Naive thymus-derived CD4-positive, alpha-beta T cell (primary cell): ENCODE measurements at regions of chr6 and their contacts with region 1.

Region 1: DNA sequence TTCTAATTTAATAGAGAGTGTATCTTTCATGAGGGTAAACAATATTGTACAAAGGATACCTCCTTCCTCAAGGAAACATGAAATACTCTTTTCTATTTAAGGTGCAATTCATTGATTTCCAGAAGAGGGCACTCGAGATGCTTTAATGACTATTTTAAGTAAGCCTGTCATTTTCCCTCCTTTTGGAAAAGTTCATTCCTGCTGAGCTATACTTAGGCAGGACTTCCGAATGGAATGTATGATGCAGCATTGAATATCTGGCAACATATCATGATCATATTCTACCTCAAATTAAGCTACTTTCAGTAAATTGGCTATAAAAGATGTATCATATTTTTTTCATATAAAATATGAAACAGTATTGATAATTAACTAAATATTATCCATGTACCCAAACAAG is 5.0 kb downstream of the DST start:
- DNase-seq: peak in 1 of 9 donors; percentile 7
- ATAC-seq: no peak
- H3K4me3 ChIP-seq: no peak overlapping the region
- H3K4me3 Mint-ChIP-seq: no peak overlapping the region
- H3K27ac ChIP-seq: no peak overlapping the region
- H3K27ac Mint-ChIP-seq: no peak overlapping the region
- H3K4me1 ChIP-seq: no peaks in the 10 kb centered on the region
- H3K4me1 Mint-ChIP-seq: no peaks in the 10 kb centered on the region
- H3K27me3 ChIP-seq: no peaks in the 10 kb centered on the region
- H3K27me3 Mint-ChIP-seq: peaks cover 2 to 13% (median 10%) of the 10 kb centered on the region in 5 donors

Region 2: DNA sequence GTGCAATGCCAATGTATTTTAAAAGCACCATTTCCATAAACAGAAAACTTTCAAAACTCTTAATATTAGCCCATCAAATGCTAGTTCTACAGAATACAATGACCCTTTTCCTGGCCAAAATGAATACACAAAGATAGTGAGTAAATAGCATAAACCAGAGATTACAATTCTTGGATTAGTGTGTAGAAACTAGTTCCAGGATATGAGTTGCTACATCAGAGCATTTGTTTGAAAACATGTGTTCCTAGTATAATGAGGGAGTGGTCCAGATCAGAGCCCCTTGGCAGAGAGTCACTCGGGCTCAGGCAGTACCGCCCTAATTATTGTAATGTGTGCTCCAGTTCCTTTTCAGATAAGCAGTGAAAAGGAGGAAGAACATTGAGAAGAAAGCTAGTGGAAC is 326.6 kb before region 1 on chr6:
- CTCF ChIA-PET with region 1: no interaction called
- POLR2A ChIA-PET with region 1: no interaction called
- intact Hi-C with region 1: no loop called
- DNase-seq: no peak
- ATAC-seq: no peak
- H3K4me3 ChIP-seq: no peak overlapping the region
- H3K4me3 Mint-ChIP-seq: no peak overlapping the region
- H3K27ac ChIP-seq: no peak overlapping the region
- H3K27ac Mint-ChIP-seq: no peak overlapping the region
- H3K4me1 ChIP-seq: no peaks in the 10 kb centered on the region
- H3K4me1 Mint-ChIP-seq: no peaks in the 10 kb centered on the region
- H3K27me3 ChIP-seq: no peaks in the 10 kb centered on the region
- H3K27me3 Mint-ChIP-seq: peaks cover 0 to 25% (median 6%) of the 10 kb centered on the region in 5 donors

Region 3: DNA sequence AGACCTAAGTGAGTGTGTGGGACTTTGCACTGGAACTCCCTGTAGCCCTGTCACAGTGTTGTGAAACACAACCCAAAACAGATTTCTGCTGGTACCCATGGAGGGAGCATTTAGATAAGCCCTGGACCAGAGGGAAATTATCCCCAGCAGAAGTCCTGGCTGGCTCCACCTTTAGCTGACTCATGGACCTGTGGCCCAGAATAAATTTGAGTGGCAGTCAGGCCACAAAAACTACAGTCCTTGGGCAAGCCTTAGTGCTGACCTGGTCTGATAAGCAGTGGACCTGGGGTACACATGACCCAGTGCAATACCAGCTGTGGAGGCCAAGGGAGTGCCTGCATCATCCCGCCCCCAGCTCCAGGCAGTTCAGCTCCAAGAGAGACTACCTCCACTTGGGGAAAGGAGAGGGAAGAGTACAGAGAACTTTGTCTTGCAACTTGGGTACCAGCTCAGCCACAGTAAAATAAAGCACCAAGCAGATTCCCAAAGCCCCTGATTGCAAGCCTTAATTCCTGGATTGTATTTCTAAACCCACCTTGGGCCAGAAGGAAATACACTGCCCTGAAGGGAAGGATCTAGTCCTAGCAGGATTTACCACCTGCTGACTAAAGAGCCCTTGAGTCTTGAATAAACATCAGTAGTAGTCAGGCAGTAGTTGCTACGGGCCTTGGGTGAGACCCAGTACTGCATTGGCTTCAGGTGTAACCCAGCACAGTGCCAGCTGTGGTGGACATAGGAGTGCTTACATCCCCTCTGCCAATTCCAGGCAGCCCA is 249.8 kb before region 1 on chr6:
- CTCF ChIA-PET with region 1: no interaction called
- POLR2A ChIA-PET with region 1: no interaction called
- intact Hi-C with region 1: no loop called
- DNase-seq: no peak
- ATAC-seq: no peak
- H3K4me3 ChIP-seq: no peak overlapping the region
- H3K4me3 Mint-ChIP-seq: no peak overlapping the region
- H3K27ac ChIP-seq: no peak overlapping the region
- H3K27ac Mint-ChIP-seq: no peak overlapping the region
- H3K4me1 ChIP-seq: no peaks in the 10 kb centered on the region
- H3K4me1 Mint-ChIP-seq: no peaks in the 10 kb centered on the region
- H3K27me3 ChIP-seq: no peaks in the 10 kb centered on the region
- H3K27me3 Mint-ChIP-seq: peaks cover 0 to 25% (median 10%) of the 10 kb centered on the region in 5 donors

Region 4: GRCh38 chr6:56699066-56699654 is 61.5 kb after region 1 on chr6:
- CTCF ChIA-PET with region 1: no interaction called
- POLR2A ChIA-PET with region 1: no interaction called
- intact Hi-C with region 1: loop called in 1 of 2 experiments (anchors 1 kb)
- DNase-seq: peak in 1 of 9 donors; percentile 8
- ATAC-seq: no peak
- H3K4me3 ChIP-seq: no peak overlapping the region
- H3K4me3 Mint-ChIP-seq: no peak overlapping the region
- H3K27ac ChIP-seq: no peak overlapping the region
- H3K27ac Mint-ChIP-seq: no peak overlapping the region
- H3K4me1 ChIP-seq: no peaks in the 10 kb centered on the region
- H3K4me1 Mint-ChIP-seq: peaks cover 0 to 2% (median 0%) of the 10 kb centered on the region in 7 donors
- H3K27me3 ChIP-seq: no peaks in the 10 kb centered on the region
- H3K27me3 Mint-ChIP-seq: peaks cover 0 to 7% (median 4%) of the 10 kb centered on the region in 5 donors

Region 5: GRCh38 chr6:57021086-57021720 is 383.6 kb after region 1 on chr6:
- CTCF ChIA-PET with region 1: no interaction called
- POLR2A ChIA-PET with region 1: no interaction called
- intact Hi-C with region 1: loop called in 1 of 2 experiments (anchors 10 kb)
- DNase-seq: peak in 5 of 9 donors; percentile 7 to 35 (median 15)
- ATAC-seq: peak; percentile 76
- H3K4me3 ChIP-seq: no peak overlapping the region
- H3K4me3 Mint-ChIP-seq: no peak overlapping the region
- H3K27ac ChIP-seq: no peak overlapping the region
- H3K27ac Mint-ChIP-seq: no peak overlapping the region
- H3K4me1 ChIP-seq: no peaks in the 10 kb centered on the region
- H3K4me1 Mint-ChIP-seq: no peaks in the 10 kb centered on the region
- H3K27me3 ChIP-seq: no peaks in the 10 kb centered on the region
- H3K27me3 Mint-ChIP-seq: peaks cover 4 to 30% (median 11%) of the 10 kb centered on the region in 5 donors